ENCODE measurements at regions of chr9 and their contacts with region 1.

Region 1: GRCh38 chr9:706606-707459 is 134.7 kb upstream of the DMRT1 start:
- DNase-seq: peak; percentile 9
- H3K4me3 Mint-ChIP-seq: peak overlapping the region; percentile 86
- H3K27ac Mint-ChIP-seq: peak overlapping the region; percentile 79
- H3K4me1 Mint-ChIP-seq: peaks cover 12% of the 10 kb centered on the region
- H3K27me3 Mint-ChIP-seq: peaks cover 10% of the 10 kb centered on the region

Region 2: DNA sequence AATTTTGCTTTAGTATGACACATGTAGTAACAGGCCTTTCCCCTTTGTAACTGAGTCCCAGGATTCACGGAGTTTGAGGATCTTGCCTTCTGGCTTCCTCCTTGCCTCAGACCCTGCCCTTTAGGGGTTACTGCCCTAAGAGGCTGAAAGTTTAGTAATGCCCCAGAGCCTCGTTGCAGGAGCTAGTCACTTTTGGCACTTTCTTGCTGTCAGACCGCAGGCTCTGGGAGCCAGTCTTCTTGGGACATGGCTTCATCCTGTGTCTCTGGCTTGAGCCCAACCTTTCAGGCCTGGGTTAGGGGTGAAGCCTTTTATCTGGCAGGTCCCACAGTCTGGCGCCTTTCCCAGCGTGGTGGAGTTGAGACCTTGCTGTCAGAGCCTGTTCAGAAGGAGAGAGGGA is 51.0 kb before region 1 on chr9:
- intact Hi-C with region 1: no loop called
- DNase-seq: no peak
- H3K4me3 Mint-ChIP-seq: no peak overlapping the region
- H3K27ac Mint-ChIP-seq: no peak overlapping the region
- H3K4me1 Mint-ChIP-seq: peaks cover 5% of the 10 kb centered on the region
- H3K27me3 Mint-ChIP-seq: peaks cover 4% of the 10 kb centered on the region

Region 3: DNA sequence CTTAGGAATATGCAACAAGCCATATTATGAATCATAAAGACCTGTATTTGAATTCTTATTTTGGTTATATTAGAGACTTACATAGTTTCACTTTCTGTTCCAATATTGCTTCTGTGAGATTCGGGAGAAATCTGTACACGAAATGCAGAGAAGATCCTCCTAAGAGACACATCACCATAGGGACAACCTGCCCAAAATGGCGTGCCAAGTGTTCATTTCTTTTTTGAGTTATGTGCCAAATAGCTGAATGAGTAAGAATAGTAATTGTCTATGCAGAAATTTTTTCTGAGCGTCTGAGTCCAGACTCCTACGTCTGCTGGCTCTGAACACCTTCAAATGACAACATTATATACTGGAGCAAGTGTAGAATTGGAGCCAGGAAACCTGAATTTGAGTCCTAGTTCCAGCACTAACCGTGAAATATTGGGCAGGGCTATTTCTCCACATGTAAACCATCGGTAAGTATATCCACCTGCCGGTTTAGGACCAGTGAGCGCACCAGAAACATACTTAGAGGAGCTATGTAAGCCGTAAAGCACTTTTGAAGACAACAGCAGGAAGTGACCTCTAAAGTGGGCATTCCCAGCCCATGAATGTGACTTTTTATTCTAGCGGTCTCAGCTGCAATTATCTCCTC is 29.3 kb before region 1 on chr9:
- intact Hi-C with region 1: loop called (anchors 2 kb)
- DNase-seq: no peak
- H3K4me3 Mint-ChIP-seq: peak overlapping the region; percentile 61
- H3K27ac Mint-ChIP-seq: no peak overlapping the region
- H3K4me1 Mint-ChIP-seq: peaks cover 24% of the 10 kb centered on the region
- H3K27me3 Mint-ChIP-seq: peaks cover 5% of the 10 kb centered on the region

Region 4: DNA sequence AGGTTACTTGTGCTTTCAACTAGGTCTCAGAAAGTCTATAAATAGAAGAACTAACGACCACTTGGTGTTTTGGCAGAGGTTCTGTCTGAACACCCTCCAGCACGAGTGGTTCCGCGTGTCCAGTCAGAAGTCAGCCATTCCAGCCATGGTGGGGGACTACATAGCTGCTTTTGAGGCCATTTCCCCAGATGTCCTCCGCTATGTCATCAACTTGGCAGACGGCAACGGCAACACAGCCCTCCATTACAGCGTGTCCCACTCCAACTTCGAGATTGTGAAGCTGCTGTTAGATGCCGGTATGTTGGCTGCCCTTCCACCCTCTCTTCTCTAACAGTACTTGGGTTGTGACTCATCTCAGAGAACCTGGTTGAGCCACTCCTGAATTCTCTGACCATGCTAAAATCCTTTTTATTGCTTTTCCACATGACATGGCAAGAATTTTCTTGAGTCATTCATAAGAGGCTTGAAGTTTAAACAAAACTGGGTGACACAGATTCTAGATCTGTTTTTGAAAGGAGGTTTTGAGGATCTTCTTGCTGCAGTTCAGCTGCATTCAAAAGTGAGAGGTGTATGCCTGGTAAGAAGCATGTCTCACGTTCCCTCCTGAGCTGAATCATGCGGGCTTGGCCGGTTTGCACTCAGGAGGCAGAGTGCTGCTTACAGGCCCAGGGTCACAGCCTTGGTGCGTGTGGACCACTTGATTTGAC is 31.5 kb after region 1 on chr9:
- intact Hi-C with region 1: no loop called
- DNase-seq: no peak
- H3K4me3 Mint-ChIP-seq: no peak overlapping the region
- H3K27ac Mint-ChIP-seq: no peak overlapping the region
- H3K4me1 Mint-ChIP-seq: no peaks in the 10 kb centered on the region
- H3K27me3 Mint-ChIP-seq: no peaks in the 10 kb centered on the region

Region 5: GRCh38 chr9:751137-752051 is 44.6 kb after region 1 on chr9:
- intact Hi-C with region 1: loop called (anchors 5 kb)
- DNase-seq: no peak
- H3K4me3 Mint-ChIP-seq: no peak overlapping the region
- H3K27ac Mint-ChIP-seq: peak overlapping the region; percentile 40
- H3K4me1 Mint-ChIP-seq: peaks cover 56% of the 10 kb centered on the region
- H3K27me3 Mint-ChIP-seq: no peaks in the 10 kb centered on the region

Measured in activated T-helper 1 cell treated with anti-CD3 and anti-CD28 coated beads, Interleukin-12 subunit alpha, Interleukin-12 subunit beta, Interleukin-2, Interleukin-4 antibody, amounts not matched to agents 30 ng/mL and 10 ng/mL and 1 ng/mL, durations not matched to agents 14 hours and 24 hours and 36 hours (primary cell).